Activated CD4-positive, alpha-beta T cell treated with anti-CD3 and anti-CD28 coated beads, Interleukin-2, amount 10 ng/mL, durations not matched to agents 24 days and 14 days (primary cell): ENCODE measurements at regions of chr6 and their contacts with region 1.

Region 1: GRCh38 chr6:29752451-29753308 is 29.4 kb downstream of the HLA-F start:
- DNase-seq: peak; percentile 95
- H3K4me3 Mint-ChIP-seq: peak overlapping the region; percentile 86
- H3K27ac Mint-ChIP-seq: peak overlapping the region; percentile 95
- H3K4me1 Mint-ChIP-seq: peaks cover 52% of the 10 kb centered on the region
- H3K27me3 Mint-ChIP-seq: no peaks in the 10 kb centered on the region

Region 2: GRCh38 chr6:29649701-29650673 is 102.7 kb before region 1 on chr6:
- intact Hi-C with region 1: loop called (anchors 2 kb)
- DNase-seq: peak; percentile 99
- H3K4me3 Mint-ChIP-seq: peak overlapping the region; percentile 94
- H3K27ac Mint-ChIP-seq: peak overlapping the region; percentile 99
- H3K4me1 Mint-ChIP-seq: peaks cover 10% of the 10 kb centered on the region
- H3K27me3 Mint-ChIP-seq: peaks cover 5% of the 10 kb centered on the region

Region 3: GRCh38 chr6:29705389-29706231 is 47.1 kb before region 1 on chr6:
- intact Hi-C with region 1: loop called (anchors 1 kb)
- DNase-seq: peak; percentile 67
- H3K4me3 Mint-ChIP-seq: no peak overlapping the region
- H3K27ac Mint-ChIP-seq: no peak overlapping the region
- H3K4me1 Mint-ChIP-seq: peaks cover 40% of the 10 kb centered on the region
- H3K27me3 Mint-ChIP-seq: peaks cover 26% of the 10 kb centered on the region

Region 4: GRCh38 chr6:29737707-29738630 is 14.7 kb before region 1 on chr6:
- intact Hi-C with region 1: loop called (anchors 1 kb)
- DNase-seq: peak; percentile 92
- H3K4me3 Mint-ChIP-seq: no peak overlapping the region
- H3K27ac Mint-ChIP-seq: no peak overlapping the region
- H3K4me1 Mint-ChIP-seq: peaks cover 18% of the 10 kb centered on the region
- H3K27me3 Mint-ChIP-seq: no peaks in the 10 kb centered on the region

Region 5: GRCh38 chr6:29763491-29764289 is 11.0 kb after region 1 on chr6:
- intact Hi-C with region 1: loop called (anchors 1 kb)
- DNase-seq: peak; percentile 62
- H3K4me3 Mint-ChIP-seq: no peak overlapping the region
- H3K27ac Mint-ChIP-seq: peak overlapping the region; percentile 65
- H3K4me1 Mint-ChIP-seq: peaks cover 38% of the 10 kb centered on the region
- H3K27me3 Mint-ChIP-seq: peaks cover 2% of the 10 kb centered on the region

Region 6: DNA sequence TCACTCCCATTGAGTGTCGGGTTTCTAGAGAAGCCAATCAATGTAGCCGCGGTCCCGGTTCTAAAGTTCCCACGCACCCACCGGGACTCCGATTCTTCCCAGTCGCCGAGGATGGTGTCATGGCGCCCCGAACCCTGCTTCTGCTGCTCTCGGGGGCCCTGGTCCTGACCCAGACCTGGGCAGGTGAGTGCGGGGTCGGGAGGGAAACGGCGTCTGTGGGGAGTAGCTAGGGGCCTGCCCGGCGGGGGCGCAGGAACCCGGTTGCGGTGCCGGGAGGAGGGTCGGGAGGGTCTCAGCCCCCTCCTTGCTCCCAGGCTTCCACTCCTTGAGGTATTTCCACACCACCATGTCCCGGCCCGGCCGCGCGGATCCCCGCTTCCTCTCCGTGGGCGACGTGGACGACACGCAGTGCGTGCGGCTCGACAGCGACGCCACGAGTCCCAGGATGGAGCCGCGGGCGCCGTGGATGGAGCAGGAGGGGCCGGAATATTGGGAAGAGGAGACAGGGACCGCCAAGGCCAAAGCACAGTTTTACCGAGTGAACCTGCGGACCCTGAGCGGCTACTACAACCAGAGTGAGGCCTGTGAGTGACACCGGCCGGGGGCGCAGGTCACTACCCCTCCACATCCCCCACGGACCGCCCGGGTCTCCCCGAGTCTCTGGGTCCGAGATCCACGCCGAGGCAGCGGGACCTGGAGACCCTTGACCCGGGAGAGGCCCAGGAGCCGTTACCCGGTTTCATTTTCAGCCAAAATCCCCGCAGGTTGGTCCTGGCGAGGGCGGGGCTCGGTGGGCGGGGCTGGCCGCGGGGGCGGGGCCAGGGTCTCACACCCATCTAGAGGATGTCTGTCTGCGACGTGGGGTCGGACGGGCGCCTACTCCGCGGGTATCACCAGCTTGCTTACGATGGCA is 39.7 kb after region 1 on chr6:
- intact Hi-C with region 1: loop called (anchors 1 kb)
- DNase-seq: peak; percentile 91
- H3K4me3 Mint-ChIP-seq: peak overlapping the region; percentile 87
- H3K27ac Mint-ChIP-seq: peak overlapping the region; percentile 77
- H3K4me1 Mint-ChIP-seq: peaks cover 10% of the 10 kb centered on the region
- H3K27me3 Mint-ChIP-seq: peaks cover 55% of the 10 kb centered on the region